ENCODE measurements at regions of chr11 and their contacts with region 1.

Region 1: GRCh38 chr11:105862736-105863367 is 159.2 kb downstream of the MSANTD4 start:
- DNase-seq: peak; percentile 4
- H3K4me3 ChIP-seq: no peak overlapping the region
- CTCF ChIP-seq: peak; percentile 50

Region 2: DNA sequence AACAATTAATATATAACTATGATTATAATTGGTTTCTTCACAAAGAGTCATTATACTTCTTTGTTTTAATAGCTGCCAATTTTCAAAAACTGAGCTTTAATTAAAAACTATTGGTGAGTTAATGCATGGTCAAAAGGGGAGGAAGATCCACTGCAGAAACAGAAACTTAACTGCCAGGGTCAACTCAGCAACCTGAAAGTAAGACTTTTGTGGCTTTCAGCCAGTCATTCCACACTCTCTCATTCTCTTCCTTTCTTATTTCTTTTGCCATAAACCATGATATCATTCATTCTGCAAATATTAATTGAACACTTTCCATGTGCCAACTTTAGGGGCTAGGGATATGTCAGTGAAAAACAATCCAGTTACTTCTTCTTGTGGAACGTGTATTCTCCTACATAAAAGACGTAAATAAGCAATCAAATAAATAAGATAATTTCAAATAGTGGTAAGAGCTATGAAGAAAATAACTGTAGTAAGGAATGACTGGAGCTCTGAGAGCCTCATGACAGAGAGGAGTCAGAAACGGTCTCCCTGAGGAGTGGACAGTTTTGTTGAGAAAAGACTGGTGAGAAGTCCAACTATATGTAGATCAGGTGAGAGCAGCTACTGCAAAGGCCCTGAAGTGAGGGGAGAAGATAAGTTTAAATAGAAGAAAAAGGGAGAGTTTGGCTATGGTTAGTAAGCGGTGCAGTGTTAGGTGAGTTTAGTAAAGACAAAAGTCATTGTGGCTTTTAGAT is 122.5 kb before region 1 on chr11:
- CTCF ChIA-PET with region 1: no interaction called
- POLR2A ChIA-PET with region 1: no interaction called
- DNase-seq: no peak
- H3K4me3 ChIP-seq: no peak overlapping the region
- CTCF ChIP-seq: no peak

Region 3: DNA sequence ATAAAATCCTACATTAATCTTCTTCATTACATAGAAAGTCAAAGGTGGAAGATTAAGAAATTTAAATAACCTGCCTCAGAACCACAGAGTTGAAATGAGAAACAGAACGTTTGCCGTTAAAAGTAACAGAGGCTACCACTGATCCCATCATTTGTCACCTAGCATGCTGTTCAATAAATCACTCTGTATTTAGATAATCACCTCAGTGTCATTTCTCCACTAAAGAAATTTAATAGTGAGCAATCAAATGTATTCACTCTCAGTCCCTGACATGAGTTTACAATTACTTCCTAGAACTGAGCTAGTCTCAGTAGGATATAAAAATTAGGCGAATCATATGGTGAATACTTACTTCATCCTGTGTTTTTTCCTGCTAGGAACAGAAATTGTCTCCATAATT is 10.4 kb before region 1 on chr11:
- CTCF ChIA-PET with region 1: interaction called, 10 read pairs
- POLR2A ChIA-PET with region 1: no interaction called
- DNase-seq: no peak
- H3K4me3 ChIP-seq: no peak overlapping the region
- CTCF ChIP-seq: no peak

Region 4: DNA sequence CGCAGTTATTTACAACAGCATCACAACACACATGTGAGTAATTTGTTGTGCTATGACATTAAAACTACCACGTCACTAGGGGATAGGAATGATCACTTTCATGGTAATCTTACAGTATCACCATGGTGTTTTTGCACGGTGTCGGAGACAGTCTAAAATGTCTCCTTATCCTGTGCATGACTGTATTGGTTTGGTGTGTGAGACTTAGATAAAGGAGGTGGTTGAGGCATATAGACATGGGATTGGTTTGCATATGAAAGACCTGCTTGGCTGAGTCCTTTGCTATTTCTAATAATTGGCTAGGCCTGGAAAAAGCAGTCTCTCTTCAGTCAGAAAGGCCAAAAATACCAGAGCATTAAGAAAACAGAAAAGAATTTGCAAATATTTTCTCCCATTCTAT is 129.0 kb after region 1 on chr11:
- CTCF ChIA-PET with region 1: no interaction called
- POLR2A ChIA-PET with region 1: no interaction called
- DNase-seq: no peak
- H3K4me3 ChIP-seq: no peak overlapping the region
- CTCF ChIP-seq: no peak